ENCODE measurements at regions of chr7 and their contacts with region 1.

Region 1: GRCh38 chr7:156892821-156893706 is at the start of gene LMBR1:
- DNase-seq: peak; percentile 92 to 96 (median 94)
- H3K4me3 ChIP-seq: peak within 1 kb of the TSS; percentile 76
- H3K4me3 Mint-ChIP-seq: peak within 1 kb of the TSS; percentile 87 to 96 (median 93)
- H3K27ac ChIP-seq: peak within 1 kb of the TSS; percentile 85
- H3K27ac Mint-ChIP-seq: peak within 1 kb of the TSS; percentile 89 to 98 (median 94)
- H3K4me1 ChIP-seq: peaks cover 10% of the 10 kb centered on the region
- H3K4me1 Mint-ChIP-seq: peaks cover 30 to 58% (median 47%) of the 10 kb centered on the region in 3 donors
- H3K27me3 ChIP-seq: no peaks in the 10 kb centered on the region
- H3K27me3 Mint-ChIP-seq: no peaks in the 10 kb centered on the region
- total RNA-seq, gene LMBR1: 49.2 to 51.9 TPM

Region 2: GRCh38 chr7:156854654-156855053 is 38.4 kb before region 1 on chr7:
- CTCF ChIA-PET with region 1: no interaction called
- POLR2A ChIA-PET with region 1: no interaction called
- DNase-seq: no peak
- H3K4me3 ChIP-seq: no peak overlapping the region
- H3K4me3 Mint-ChIP-seq: peak overlapping the region in 1 of 7 donors; percentile 18
- H3K27ac ChIP-seq: no peak overlapping the region
- H3K27ac Mint-ChIP-seq: no peak overlapping the region
- H3K4me1 ChIP-seq: no peaks in the 10 kb centered on the region
- H3K4me1 Mint-ChIP-seq: peaks cover 16 to 30% (median 21%) of the 10 kb centered on the region in 3 donors
- H3K27me3 ChIP-seq: no peaks in the 10 kb centered on the region
- H3K27me3 Mint-ChIP-seq: no peaks in the 10 kb centered on the region

Region 3: DNA sequence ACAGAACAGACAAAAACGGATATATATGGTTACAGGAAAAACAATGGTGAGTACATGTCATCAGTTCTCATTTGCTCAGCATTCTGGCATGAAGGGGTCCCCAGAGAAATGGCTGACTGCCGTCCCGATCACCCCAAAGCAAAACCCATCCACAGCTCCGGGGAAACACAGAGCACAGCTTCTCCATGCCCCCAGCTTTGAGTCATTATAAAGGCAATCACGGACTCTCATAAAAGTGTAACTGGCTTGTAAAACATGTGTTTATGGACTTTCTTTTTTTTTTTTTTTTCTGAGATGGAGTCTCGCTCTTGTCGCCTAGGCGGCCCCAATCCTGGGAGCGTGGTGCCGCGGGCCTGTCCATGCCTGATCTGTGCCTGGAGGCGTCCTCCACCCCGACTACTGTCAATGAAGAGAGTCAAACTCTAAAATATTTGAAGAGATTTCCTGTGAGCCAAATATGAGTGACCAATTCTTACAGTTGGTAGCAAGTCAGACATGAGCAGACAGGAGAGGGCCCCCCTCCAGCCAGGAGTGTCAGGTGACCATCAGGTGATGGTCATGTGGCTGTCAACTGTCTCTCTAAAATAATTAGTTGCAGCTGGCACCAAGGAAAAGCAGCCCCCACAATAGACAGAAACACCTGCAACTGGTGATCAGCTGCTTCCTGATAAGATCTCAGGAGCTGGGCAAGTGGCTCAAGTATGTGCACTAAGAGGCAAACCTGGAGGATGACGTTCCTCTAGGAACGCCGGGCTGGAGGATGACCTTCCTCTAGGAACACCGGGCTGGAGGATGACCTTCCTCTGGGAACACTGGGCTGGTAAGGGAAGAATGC is 34.7 kb after region 1 on chr7:
- CTCF ChIA-PET with region 1: no interaction called
- POLR2A ChIA-PET with region 1: interaction called, 19 read pairs
- DNase-seq: no peak
- H3K4me3 ChIP-seq: no peak overlapping the region
- H3K4me3 Mint-ChIP-seq: no peak overlapping the region
- H3K27ac ChIP-seq: no peak overlapping the region
- H3K27ac Mint-ChIP-seq: peak overlapping the region in 4 of 8 donors; percentile 27 to 66 (median 44)
- H3K4me1 ChIP-seq: peaks cover 5% of the 10 kb centered on the region
- H3K4me1 Mint-ChIP-seq: peaks cover 18 to 43% (median 34%) of the 10 kb centered on the region in 3 donors
- H3K27me3 ChIP-seq: no peaks in the 10 kb centered on the region
- H3K27me3 Mint-ChIP-seq: peaks cover 0 to 8% of the 10 kb centered on the region in 2 donors

Region 4: GRCh38 chr7:157027568-157028198 is 134.6 kb after region 1 on chr7:
- CTCF ChIA-PET with region 1: no interaction called
- POLR2A ChIA-PET with region 1: no interaction called
- DNase-seq: no peak
- H3K4me3 ChIP-seq: no peak overlapping the region
- H3K4me3 Mint-ChIP-seq: no peak overlapping the region
- H3K27ac ChIP-seq: no peak overlapping the region
- H3K27ac Mint-ChIP-seq: no peak overlapping the region
- H3K4me1 ChIP-seq: no peaks in the 10 kb centered on the region
- H3K4me1 Mint-ChIP-seq: peaks cover 0 to 2% (median 0%) of the 10 kb centered on the region in 3 donors
- H3K27me3 ChIP-seq: peaks cover 17% of the 10 kb centered on the region
- H3K27me3 Mint-ChIP-seq: peaks cover 39 to 79% of the 10 kb centered on the region in 2 donors

Measured in CD8-positive, alpha-beta memory T cell (primary cell).